Vagina (tissue), 2 donors: ENCODE measurements at regions of chr1 and their contacts with region 1.

Region 1: GRCh38 chr1:154809436-154810413 is 60.4 kb downstream of the KCNN3 start:
- DNase-seq: no peak
- H3K4me3 ChIP-seq: no peak overlapping the region
- H3K27ac ChIP-seq: peak overlapping the region; percentile 40
- H3K4me1 ChIP-seq: peaks cover 12% of the 10 kb centered on the region
- H3K27me3 ChIP-seq: no peaks in the 10 kb centered on the region
- CTCF ChIP-seq: no peak
- POLR2A ChIP-seq: no peak

Region 2: DNA sequence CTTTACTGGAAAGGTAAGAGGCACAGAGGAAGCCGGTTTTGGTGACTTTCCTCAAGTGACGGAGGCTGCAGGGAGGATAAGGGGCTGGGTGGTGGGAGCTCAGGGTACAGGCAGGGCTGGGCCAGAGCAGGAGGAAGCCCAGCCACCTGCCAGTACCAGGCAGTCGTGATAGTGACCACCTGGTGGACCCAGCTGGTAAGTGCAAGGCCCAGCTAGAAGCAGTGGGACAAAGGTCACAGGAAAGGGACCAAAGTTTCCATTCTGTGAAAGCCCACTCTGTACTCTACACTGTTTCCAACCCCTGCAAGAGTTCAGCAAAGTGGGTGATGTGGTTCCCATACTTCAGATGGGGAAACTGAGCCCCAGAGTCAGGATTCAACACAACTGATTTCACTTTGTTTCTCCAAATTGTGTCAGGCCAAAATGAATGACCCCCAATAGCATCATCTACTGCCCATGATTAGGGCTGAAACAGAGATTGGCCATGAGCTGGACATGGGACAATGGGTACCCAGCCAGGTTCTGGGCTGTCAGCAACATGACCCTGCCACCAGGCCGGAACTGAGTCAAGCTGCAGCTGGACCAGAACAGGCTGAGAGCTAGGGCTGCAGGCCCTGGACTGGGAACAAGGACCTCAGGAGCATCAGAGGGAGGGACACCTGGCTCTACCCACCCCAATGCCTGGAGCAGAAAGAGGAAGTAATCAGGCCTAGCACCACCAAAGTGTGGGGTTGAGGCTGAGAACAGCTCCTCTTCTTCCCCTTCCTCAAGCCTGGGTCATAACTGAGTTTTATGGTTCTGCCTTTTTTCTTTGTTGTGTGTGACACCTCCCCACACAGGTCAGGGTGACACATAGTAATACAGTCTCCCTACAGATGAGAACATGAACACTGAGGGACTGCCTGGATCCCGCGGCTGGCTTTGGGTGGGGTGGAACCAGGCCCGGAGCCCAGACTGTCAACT is 10.2 kb after region 1 on chr1:
- intact Hi-C with region 1: no loop called
- DNase-seq: no peak
- H3K4me3 ChIP-seq: no peak overlapping the region
- H3K27ac ChIP-seq: no peak overlapping the region
- H3K4me1 ChIP-seq: peaks cover 10% of the 10 kb centered on the region
- H3K27me3 ChIP-seq: no peaks in the 10 kb centered on the region
- CTCF ChIP-seq: no peak
- POLR2A ChIP-seq: no peak

Region 3: DNA sequence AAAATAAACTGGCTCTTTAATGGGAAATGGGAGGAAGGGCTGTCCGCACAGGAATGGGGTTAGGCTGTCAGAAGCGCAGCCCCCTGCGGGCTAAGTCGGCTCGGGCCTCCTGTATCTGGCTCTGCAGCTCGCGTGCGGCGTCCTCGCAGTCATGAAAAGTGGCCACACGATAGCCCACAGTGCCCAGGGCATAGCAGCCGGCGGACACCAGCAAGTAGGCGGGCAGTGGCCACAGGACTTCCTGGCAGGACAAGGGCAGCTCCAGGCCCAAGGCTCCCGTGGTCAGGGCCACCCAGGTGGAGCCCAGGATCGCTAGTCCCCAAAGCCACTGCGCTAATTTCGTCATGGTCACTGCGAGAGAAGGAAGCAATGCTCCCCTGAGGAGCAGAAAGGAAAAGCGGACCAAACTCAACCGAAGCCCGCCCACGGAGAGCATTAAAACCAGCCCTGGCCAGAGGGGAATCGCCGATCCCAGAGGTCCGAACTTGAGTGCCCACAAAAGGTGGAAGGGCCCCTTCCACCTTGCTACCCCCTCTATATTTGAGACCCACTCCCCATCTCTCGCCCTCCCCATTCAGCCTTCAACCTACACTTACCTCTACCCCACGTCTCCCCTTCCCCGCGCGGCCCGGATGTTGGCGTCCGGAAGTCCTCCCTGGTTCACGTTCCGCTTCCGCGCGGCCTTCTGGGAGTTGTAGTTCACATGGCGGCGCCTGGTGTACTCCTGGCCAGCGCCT is 330.3 kb after region 1 on chr1 and contains the start of gene DPM3:
- intact Hi-C with region 1: loop called (anchors 5 kb)
- DNase-seq: peak in 1 of 2 donors; percentile 90
- H3K4me3 ChIP-seq: peak within 1 kb of the TSS; percentile 94 to 98
- H3K27ac ChIP-seq: peak within 1 kb of the TSS; percentile 91
- H3K4me1 ChIP-seq: peaks cover 37% of the 10 kb centered on the region
- H3K27me3 ChIP-seq: no peaks in the 10 kb centered on the region
- CTCF ChIP-seq: no peak
- POLR2A ChIP-seq: peak in 1 of 2 donors; percentile 64
- total RNA-seq, gene DPM3: 114 TPM